ENCODE measurements at regions of chr13 and their contacts with region 1.

Region 1: GRCh38 chr13:32261567-32261966 is 53.6 kb downstream of the ZAR1L start:
- DNase-seq: no peak
- H3K4me3 ChIP-seq: no peak overlapping the region
- H3K27me3 ChIP-seq: no peaks in the 10 kb centered on the region
- CTCF ChIP-seq: no peak

Region 2: DNA sequence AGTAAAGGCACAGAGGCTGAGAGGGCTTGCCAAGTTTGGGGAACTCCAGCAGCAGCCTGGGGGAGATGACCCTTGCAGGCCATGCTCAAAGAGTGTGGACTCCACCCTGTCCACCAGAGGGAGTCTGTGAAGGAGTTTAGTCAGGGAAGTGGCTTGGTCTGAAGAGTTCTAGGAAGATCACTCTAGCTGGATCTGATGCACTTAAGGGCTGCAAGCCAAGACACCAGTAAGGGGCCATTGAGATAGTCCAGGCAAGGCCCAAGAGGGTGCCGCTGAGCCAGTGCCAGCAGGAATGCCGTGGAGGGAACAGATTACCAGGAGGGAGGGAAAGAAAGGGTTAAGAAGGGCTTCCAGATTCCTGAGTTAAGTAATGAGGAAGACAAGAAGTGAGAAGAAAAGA is 15.1 kb before region 1 on chr13:
- CTCF ChIA-PET with region 1: interaction called, 24 read pairs
- POLR2A ChIA-PET with region 1: no interaction called
- DNase-seq: no peak
- H3K4me3 ChIP-seq: no peak overlapping the region
- H3K27me3 ChIP-seq: no peaks in the 10 kb centered on the region
- CTCF ChIP-seq: peak; percentile 77

Region 3: DNA sequence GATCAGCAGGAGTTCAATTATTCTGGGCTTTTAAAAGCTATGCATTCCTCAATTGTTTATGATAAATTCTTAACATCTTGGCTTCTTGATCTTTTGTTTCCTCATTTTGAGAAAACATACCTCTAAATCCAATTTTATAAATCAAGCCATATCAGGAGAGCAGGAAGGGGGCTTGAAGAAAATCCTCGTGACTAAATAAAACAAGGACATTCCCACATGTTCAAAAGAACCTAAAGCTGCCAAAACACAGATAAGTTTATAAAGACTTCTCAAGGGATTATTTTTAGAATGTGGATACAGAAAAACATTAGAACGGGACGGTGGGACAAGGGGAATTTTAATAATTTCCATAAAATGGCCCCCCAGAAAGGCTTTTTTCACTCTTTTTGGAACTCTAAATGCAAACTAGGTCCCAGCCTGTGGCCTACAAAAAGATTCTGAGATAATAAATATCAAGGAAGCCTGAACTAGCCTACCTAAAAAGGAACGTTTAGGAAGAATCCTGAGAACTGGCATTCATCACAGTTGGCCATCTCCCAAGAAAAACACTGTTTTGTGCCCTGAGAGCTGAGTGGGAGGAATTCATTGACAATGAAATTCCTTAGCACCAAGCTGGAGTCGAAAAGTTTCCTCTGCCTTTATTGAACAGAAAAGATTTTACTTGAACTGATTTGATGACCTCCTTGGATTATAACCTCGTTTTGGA is 23.5 kb after region 1 on chr13:
- CTCF ChIA-PET with region 1: no interaction called
- POLR2A ChIA-PET with region 1: no interaction called
- DNase-seq: peak; percentile 39
- H3K4me3 ChIP-seq: no peak overlapping the region
- H3K27me3 ChIP-seq: no peaks in the 10 kb centered on the region
- CTCF ChIP-seq: no peak

Region 4: GRCh38 chr13:33213797-33214196 is 952.2 kb after region 1 on chr13:
- CTCF ChIA-PET with region 1: no interaction called
- POLR2A ChIA-PET with region 1: interaction called, 10 read pairs
- DNase-seq: no peak
- H3K4me3 ChIP-seq: no peak overlapping the region
- H3K27me3 ChIP-seq: no peaks in the 10 kb centered on the region
- CTCF ChIP-seq: no peak

Measured in BJ (cell line).